Heart left ventricle (tissue), 16 donors: ENCODE measurements at regions of chr18 and their contacts with region 1.

Region 1: DNA sequence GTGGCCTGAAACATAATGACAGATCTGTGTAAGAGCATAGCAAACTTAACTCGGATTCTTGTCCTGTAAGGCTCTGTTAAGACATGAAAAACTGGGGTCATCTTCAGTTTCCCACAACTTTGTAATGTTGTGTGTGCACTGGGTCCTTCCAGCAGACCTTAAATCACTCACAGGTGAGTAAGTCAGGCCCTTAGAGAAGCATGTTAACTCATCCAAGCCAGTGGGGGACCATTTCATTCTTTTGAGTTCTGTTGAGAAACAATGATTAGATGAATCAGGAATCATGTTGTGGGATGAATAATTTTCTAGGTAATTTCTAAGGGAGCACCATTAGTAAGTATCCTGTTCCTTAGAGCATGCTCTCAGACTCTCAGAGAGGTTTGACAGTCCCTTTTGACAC is 167.1 kb downstream of the ESCO1 start:
- DNase-seq: no peak
- ATAC-seq: no peak
- H3K4me3 ChIP-seq: no peak overlapping the region
- H3K27ac ChIP-seq: no peak overlapping the region
- H3K4me1 ChIP-seq: no peaks in the 10 kb centered on the region
- H3K27me3 ChIP-seq: no peaks in the 10 kb centered on the region
- CTCF ChIP-seq: no peak
- POLR2A ChIP-seq: no peak

Region 2: GRCh38 chr18:21205695-21206094 is 227.7 kb before region 1 on chr18:
- intact Hi-C with region 1: loop called in 1 of 10 experiments (anchors 5 kb)
- DNase-seq: no peak
- ATAC-seq: no peak
- H3K4me3 ChIP-seq: no peak overlapping the region
- H3K27ac ChIP-seq: no peak overlapping the region
- H3K4me1 ChIP-seq: no peaks in the 10 kb centered on the region
- H3K27me3 ChIP-seq: peaks cover 0 to under 1% (median 0%) of the 10 kb centered on the region in 9 donors
- CTCF ChIP-seq: no peak
- POLR2A ChIP-seq: no peak

Region 3: DNA sequence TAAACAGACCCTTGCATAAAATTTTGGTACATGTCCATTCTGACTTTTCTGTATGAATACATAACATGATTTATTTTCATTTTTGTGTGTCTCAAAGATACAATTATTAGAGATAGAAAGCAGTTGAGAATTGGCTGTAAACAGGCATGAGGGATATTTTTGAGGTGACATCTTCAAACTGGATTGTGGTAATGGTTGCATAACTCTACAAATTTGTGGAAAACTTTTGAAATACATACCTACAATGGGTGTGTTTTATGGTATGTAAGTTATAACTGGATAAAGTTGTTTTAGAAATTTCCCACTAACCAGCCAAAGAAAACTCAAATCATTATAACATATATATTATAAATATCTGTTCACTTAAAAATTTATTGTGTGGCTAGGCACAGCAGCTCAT is 151.8 kb before region 1 on chr18:
- intact Hi-C with region 1: loop called in 1 of 10 experiments (anchors 10 kb)
- DNase-seq: no peak
- ATAC-seq: no peak
- H3K4me3 ChIP-seq: no peak overlapping the region
- H3K27ac ChIP-seq: no peak overlapping the region
- H3K4me1 ChIP-seq: peaks cover 0 to 6% (median 0%) of the 10 kb centered on the region in 12 donors
- H3K27me3 ChIP-seq: no peaks in the 10 kb centered on the region
- CTCF ChIP-seq: no peak
- POLR2A ChIP-seq: no peak

Region 4: GRCh38 chr18:21362831-21363230 is 70.6 kb before region 1 on chr18:
- intact Hi-C with region 1: no loop called
- DNase-seq: no peak
- ATAC-seq: no peak
- H3K4me3 ChIP-seq: no peak overlapping the region
- H3K27ac ChIP-seq: peak overlapping the region in 1 of 12 donors; percentile 8
- H3K4me1 ChIP-seq: peaks cover 0 to 6% (median 0%) of the 10 kb centered on the region in 12 donors
- H3K27me3 ChIP-seq: no peaks in the 10 kb centered on the region
- CTCF ChIP-seq: no peak
- POLR2A ChIP-seq: no peak

Region 5: DNA sequence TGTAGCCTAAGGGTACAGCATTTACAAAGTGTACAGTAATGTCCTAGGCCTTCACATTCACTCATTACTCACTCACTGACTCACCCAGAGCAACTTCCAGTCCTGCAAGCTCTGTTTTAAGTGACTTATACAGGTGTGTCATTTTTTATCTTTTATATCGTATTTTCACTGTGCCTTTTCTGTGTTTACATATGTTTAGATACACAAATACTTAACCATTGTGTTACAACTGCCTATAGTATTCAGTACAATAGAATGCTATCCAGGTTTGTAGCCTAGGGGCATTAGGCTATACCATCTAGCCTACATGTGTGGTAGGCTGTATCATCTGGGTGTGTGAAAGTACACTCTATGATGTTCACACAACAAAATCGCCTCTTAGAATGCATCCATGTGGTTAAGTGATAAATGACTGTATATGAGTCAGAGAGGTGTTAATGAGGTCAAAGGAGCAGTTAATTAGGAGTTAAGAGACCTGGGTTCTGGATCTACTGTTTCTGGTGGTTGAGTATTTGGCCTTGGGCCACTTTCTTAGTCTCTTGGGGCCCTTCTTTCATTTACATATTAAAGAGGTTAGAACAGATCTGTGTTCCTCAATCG is 42.3 kb before region 1 on chr18:
- intact Hi-C with region 1: loop called in 1 of 10 experiments (anchors 5 kb)
- DNase-seq: no peak
- ATAC-seq: no peak
- H3K4me3 ChIP-seq: no peak overlapping the region
- H3K27ac ChIP-seq: no peak overlapping the region
- H3K4me1 ChIP-seq: peaks cover 0 to 7% (median 0%) of the 10 kb centered on the region in 12 donors
- H3K27me3 ChIP-seq: no peaks in the 10 kb centered on the region
- CTCF ChIP-seq: no peak
- POLR2A ChIP-seq: no peak

Region 6: GRCh38 chr18:21629089-21629832 is 195.8 kb after region 1 on chr18:
- intact Hi-C with region 1: no loop called
- DNase-seq: no peak
- ATAC-seq: no peak
- H3K4me3 ChIP-seq: no peak overlapping the region
- H3K27ac ChIP-seq: no peak overlapping the region
- H3K4me1 ChIP-seq: peaks cover 0 to 4% (median 0%) of the 10 kb centered on the region in 12 donors
- H3K27me3 ChIP-seq: no peaks in the 10 kb centered on the region
- CTCF ChIP-seq: no peak
- POLR2A ChIP-seq: no peak